ENCODE measurements at regions of chr3 and their contacts with region 1.

Region 1: GRCh38 chr3:128051837-128052594 is at the start of gene SEC61A1:
- DNase-seq: peak; percentile 95
- H3K4me3 ChIP-seq: peak within 1 kb of the TSS; percentile 90 to 99 (median 99)
- H3K27ac ChIP-seq: peak within 1 kb of the TSS; percentile 92
- H3K4me1 ChIP-seq: peaks cover 39% of the 10 kb centered on the region
- H3K27me3 ChIP-seq: peaks cover 5 to 14% of the 10 kb centered on the region in 2 experiments
- CTCF ChIP-seq: no peak
- POLR2A ChIP-seq: peak; percentile 75
- total RNA-seq, gene SEC61A1: 280 and 312 TPM in 2 replicates

Region 2: GRCh38 chr3:127590593-127591477 is 461.2 kb before region 1 on chr3 and contains the start of gene TPRA1:
- CTCF ChIA-PET with region 1: no interaction called
- POLR2A ChIA-PET with region 1: no interaction called
- dilution Hi-C with region 1: no loop called
- intact Hi-C with region 1: loop called (anchors 5 kb)
- DNase-seq: peak; percentile 96
- H3K4me3 ChIP-seq: peak within 1 kb of the TSS; percentile 73 to 80 (median 78)
- H3K27ac ChIP-seq: peak within 1 kb of the TSS; percentile 66
- H3K4me1 ChIP-seq: peaks cover 15% of the 10 kb centered on the region
- H3K27me3 ChIP-seq: no peaks in the 10 kb centered on the region
- CTCF ChIP-seq: no peak
- POLR2A ChIP-seq: peak; percentile 23
- total RNA-seq, gene TPRA1: 34.3 and 34.6 TPM in 2 replicates

Region 3: DNA sequence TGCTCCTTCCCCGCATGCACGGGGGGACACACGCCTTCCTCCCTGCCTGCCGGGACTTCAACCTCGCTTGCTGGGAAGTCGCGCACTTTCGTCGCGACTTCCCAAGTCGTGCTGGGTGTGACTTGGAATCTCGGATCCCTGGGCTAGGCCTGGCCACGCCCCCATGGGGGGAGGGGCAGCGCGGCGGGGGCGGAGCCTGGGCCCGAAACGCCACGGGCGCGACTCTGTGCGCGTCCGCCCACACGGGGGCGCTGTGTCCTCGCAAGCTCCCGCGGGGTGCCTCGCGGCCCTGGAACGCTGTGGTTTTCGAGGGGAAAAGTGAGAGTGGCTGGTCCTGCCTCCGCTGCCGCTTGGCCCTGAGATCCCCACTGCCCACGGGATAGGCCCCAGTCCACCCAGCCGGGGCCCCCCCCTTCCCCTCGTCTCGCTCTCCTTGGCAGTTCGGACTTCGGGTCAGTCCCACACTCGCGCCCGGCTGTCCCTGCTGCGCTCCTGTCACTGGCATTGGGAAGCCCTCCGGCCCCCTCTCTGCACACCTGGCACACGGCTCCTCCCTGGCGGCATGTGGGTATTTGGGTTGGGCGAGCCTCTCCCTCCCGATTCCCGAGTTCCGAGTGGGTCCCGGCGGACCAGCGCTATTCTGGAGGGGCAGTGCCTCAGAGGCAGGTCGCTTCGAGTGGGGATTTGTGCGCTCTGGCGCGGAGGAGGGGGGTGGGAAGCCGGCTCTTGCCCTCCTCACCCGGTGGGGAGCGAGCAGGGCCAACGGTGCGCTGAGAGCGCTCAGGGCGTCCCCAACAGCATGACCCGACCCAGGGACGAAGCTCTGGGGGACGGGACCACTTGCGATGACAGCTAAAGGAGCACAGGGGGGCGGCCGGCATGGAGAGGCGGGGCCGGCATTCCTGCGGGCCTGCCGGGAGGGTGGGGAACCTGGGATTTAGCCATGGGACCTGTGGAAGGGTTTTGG is 23.8 kb after region 1 on chr3:
- CTCF ChIA-PET with region 1: interaction called, 5 read pairs
- POLR2A ChIA-PET with region 1: no interaction called
- dilution Hi-C with region 1: no loop called
- intact Hi-C with region 1: loop called (anchors 2 kb)
- DNase-seq: peak; percentile 94
- H3K4me3 ChIP-seq: peak overlapping the region in 2 of 3 experiments; percentile 16 to 44
- H3K27ac ChIP-seq: peak overlapping the region; percentile 33
- H3K4me1 ChIP-seq: peaks cover 51% of the 10 kb centered on the region
- H3K27me3 ChIP-seq: no peaks in the 10 kb centered on the region
- CTCF ChIP-seq: peak; percentile 95 to 98
- POLR2A ChIP-seq: peak; percentile 55

Measured in endothelial cell of umbilical vein (primary cell).